Left lung (tissue), 14 donors: ENCODE measurements at regions of chr13 and their contacts with region 1.

Region 1: GRCh38 chr13:32310134-32310706 is 4.9 kb downstream of the ZAR1L start:
- DNase-seq: peak in 2 of 4 donors; percentile 36 to 65
- ATAC-seq: peak; percentile 88
- H3K4me3 ChIP-seq: peak overlapping the region in 1 of 2 donors; percentile 24
- H3K27ac ChIP-seq: peak overlapping the region in 1 of 2 donors; percentile 68
- H3K4me1 ChIP-seq: peaks cover 0 to 20% of the 10 kb centered on the region in 2 donors
- H3K27me3 ChIP-seq: no peaks in the 10 kb centered on the region
- CTCF ChIP-seq: peak; percentile 79 to 81

Region 2: GRCh38 chr13:32019612-32020233 is 290.5 kb before region 1 on chr13:
- intact Hi-C with region 1: loop called in 1 of 2 experiments (anchors 5 kb)
- DNase-seq: peak in 1 of 4 donors; percentile 81
- ATAC-seq: peak; percentile 76
- H3K4me3 ChIP-seq: no peak overlapping the region
- H3K27ac ChIP-seq: no peak overlapping the region
- H3K4me1 ChIP-seq: no peaks in the 10 kb centered on the region
- H3K27me3 ChIP-seq: no peaks in the 10 kb centered on the region
- CTCF ChIP-seq: peak; percentile 55 to 58